Left cardiac atrium (tissue), 4 donors: ENCODE measurements at regions of chr1 and their contacts with region 1.

Region 1: DNA sequence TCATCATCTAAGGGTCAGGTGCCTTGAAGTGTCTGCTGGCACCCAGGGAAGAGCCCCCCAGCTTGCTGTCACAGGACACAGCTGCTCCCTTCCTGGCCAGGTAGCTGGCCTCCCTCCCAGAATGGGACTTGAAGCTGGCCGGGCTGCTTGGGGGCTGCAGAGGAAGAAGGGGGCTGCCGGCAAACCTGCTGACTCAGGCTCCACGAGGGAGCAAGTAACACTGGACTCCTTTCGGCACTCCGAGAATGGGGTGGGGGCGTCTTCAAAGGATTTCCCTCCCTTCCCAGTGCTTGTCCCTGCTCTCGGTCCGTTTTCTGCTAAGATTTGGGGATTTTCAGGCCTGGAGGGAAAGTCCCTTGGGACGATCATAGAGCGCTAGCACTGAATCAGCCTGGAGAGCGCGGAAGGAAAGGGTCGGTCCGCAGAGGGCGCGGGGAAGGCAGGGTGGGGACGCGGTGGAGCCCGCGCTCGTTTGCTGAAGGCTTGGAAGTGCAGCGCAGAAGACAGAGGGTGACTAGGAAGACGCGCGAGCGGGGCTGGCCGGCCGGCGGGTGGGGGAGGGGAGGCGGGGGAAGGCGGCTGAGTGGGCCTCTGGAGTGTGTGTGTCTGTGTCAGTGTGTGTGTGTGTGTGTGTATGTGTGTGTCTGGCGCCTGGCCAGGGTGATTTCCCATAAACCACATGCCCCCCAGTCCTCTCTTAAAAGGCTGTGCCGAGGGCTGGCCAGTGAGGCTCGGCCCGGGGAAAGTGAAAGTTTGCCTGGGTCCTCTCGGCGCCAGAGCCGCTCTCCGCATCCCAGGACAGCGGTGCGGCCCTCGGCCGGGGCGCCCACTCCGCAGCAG is at the start of gene CSF1:
- DNase-seq: peak; percentile 84
- ATAC-seq: peak; percentile 71 to 76
- total RNA-seq, gene CSF1: 30.8 to 44.1 TPM

Region 2: GRCh38 chr1:109979489-109980091 is 69.2 kb after region 1 on chr1:
- intact Hi-C with region 1: loop called in 1 of 2 experiments (anchors 10 kb)
- DNase-seq: peak; percentile 48
- ATAC-seq: no peak